ENCODE measurements at regions of chr9 and their contacts with region 1.

Region 1: DNA sequence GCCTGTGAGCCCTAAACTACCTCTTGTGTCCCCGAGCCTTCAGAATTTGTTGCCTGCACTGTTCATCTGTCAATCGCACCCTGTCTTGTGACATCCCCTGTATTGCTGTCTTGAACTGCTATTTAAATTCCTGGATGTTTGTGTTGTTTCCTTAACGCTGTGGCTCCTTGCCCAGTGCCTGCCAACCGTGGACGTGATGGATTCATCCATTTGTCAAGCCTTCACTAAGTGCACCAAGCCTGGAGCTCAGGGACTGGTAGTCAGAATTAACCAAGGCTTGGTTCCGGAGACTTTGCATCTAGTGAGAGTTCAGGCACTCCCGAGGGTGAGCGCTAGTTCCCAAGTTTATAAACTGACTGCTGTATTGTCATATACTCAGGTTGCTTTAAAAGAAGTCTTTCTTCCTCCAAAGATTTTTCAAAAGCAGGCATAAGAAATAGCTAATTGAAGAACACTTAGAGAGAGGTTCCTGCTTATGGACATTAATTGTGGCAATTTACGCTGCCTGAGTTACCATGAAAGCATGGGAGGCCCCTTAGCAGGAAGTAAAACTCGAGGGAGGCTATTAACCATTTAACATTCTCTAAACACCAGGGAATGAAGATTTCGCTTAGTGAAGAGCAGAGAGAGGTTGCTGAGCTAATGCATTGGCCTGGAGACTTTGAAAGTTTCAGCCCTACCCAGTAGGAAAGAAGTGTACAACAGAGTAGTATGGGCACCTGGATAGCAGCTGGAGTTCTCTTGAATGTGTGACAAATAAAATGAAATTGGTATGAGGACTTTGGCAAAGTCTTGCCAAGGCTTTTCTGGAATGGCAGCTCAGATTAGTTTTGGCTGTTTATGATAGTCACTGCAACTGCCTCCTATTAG is 29.1 kb downstream of the RGS3 start:
- DNase-seq: peak in 1 of 2 donors; percentile 50
- ATAC-seq: peak in 7 of 8 donors; percentile 5 to 63 (median 40)
- H3K4me3 ChIP-seq: no peak overlapping the region
- H3K27ac ChIP-seq: peak overlapping the region in 9 of 10 donors; percentile 29 to 83 (median 69)
- H3K4me1 ChIP-seq: peaks cover 0 to 52% (median 31%) of the 10 kb centered on the region in 9 donors
- H3K27me3 ChIP-seq: no peaks in the 10 kb centered on the region
- CTCF ChIP-seq: no peak

Region 2: DNA sequence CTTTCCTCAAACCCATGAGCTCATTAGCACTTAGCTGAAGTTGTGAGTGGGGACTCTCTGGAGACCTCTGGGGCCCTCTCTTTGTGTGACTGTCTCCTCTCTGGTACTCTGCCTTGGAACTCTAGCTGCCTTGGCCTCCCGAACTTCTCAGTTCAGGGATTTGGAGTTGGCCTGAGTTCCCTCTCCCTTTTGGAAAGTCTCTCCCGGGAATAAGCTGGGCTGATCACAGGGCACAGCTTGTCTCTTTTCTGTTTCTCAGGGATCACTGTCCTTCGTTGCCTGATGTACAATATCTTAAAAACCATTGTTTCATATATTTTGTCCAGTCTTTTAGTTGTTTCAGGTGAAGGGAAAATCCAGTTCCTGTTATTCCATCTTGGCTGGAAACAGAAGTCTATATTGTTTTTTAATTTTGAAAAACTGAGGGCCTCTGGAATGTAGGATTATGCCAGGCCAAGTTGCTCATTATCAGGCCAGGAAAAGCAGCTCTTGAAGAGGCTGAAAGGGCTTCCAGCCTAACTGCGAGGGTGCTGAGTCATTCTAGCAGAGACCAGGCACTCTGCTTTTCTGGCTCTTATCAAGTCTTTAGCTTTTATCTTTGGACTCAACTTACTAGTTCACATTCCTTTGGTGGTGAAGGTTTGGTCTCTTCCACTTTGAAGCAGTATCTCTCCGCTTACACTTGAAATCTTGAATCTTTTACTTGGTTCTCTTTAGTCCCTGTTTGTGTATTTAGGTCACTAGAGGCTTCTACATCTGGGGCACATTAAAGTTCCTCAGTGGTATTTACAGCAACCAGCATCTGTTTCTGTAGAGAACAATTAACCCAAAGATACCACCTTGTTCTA is 37.4 kb before region 1 on chr9:
- intact Hi-C with region 1: loop called in 2 of 10 experiments (anchors 5 kb)
- DNase-seq: peak in 1 of 2 donors; percentile 68
- ATAC-seq: peak; percentile 89 to 97 (median 96)
- H3K4me3 ChIP-seq: no peak overlapping the region
- H3K27ac ChIP-seq: peak overlapping the region; percentile 71 to 98 (median 90)
- H3K4me1 ChIP-seq: peaks cover 21 to 47% (median 32%) of the 10 kb centered on the region in 9 donors
- H3K27me3 ChIP-seq: no peaks in the 10 kb centered on the region
- CTCF ChIP-seq: no peak

Region 3: GRCh38 chr9:113548221-113549041 is 55.9 kb after region 1 on chr9:
- intact Hi-C with region 1: no loop called
- DNase-seq: peak; percentile 73 to 79
- ATAC-seq: peak; percentile 85 to 95 (median 92)
- H3K4me3 ChIP-seq: peak overlapping the region in 1 of 10 donors; percentile 0
- H3K27ac ChIP-seq: peak overlapping the region; percentile 70 to 91 (median 84)
- H3K4me1 ChIP-seq: peaks cover 15 to 73% (median 52%) of the 10 kb centered on the region in 9 donors
- H3K27me3 ChIP-seq: no peaks in the 10 kb centered on the region
- CTCF ChIP-seq: no peak

Region 4: DNA sequence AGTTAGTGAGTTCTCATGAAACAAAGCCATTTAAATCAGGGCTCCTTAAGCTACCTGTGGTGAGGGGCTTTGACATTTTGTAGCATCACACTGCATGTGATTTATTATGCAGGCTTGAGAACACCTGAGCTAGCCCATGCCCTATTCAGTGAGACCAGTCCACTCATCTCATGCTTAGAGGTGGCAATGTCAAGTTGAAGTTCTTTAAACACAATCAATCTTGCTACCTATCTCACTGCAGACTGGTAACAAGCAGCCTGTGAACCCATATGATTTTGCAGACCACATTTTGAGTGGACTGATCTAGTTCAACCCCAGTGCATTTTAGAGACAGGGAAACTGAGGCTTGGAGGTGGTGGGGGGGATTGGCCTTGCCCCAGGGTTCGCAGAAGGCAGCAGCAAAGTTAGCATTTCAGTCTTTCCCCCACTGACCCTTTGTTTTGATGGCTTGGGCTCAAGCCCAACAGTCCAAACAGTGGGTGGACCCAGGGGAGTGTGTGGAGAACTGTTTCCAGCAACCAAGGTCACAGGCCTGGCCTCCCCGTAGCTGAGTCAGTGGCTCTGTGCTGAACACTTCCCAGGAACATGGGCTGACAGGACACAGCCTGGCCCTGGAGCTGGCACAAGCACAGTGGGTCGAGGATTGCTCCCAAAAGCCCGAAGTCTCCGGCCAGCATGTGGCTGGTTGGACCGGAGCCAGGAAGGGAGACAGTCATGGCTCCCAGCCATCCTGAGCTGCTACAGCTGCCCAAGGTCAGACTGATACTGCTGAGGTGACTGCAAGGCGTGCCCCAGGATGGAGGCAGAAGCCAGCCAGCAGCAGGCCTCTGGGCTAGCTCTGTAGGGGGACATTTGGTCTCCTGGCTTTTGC is 66.3 kb after region 1 on chr9:
- intact Hi-C with region 1: no loop called
- DNase-seq: peak; percentile 89 to 90
- ATAC-seq: peak; percentile 92 to 98 (median 95)
- H3K4me3 ChIP-seq: no peak overlapping the region
- H3K27ac ChIP-seq: peak overlapping the region; percentile 60 to 97 (median 81)
- H3K4me1 ChIP-seq: peaks cover 8 to 74% (median 46%) of the 10 kb centered on the region in 9 donors
- H3K27me3 ChIP-seq: no peaks in the 10 kb centered on the region
- CTCF ChIP-seq: no peak

Region 5: GRCh38 chr9:113578882-113579282 is 86.3 kb after region 1 on chr9:
- intact Hi-C with region 1: no loop called
- DNase-seq: no peak
- ATAC-seq: peak in 3 of 8 donors; percentile 3 to 20 (median 14)
- H3K4me3 ChIP-seq: peak overlapping the region in 1 of 10 donors; percentile 44
- H3K27ac ChIP-seq: peak overlapping the region; percentile 16 to 93 (median 88)
- H3K4me1 ChIP-seq: peaks cover 58 to 100% (median 85%) of the 10 kb centered on the region in 9 donors
- H3K27me3 ChIP-seq: no peaks in the 10 kb centered on the region
- CTCF ChIP-seq: no peak

Region 6: DNA sequence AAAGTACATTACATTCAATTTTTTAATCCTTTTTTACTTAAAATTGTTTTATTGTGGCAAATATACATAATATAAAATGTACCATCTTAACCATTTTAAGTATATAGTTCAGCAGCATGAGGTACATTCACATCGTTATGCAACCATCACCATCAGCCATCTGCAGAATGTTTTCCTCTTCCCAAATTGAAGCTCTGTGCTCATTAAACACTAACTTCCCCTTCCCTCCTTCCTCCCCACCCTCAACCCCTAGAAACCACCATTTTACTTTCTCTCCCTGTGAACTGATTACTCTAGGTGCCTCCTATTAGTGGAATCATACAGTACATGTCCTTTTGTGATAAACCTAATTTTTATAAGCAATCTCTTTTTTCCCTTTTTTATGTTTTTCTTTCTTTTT is 1149.4 kb after region 1 on chr9:
- intact Hi-C with region 1: no loop called
- DNase-seq: no peak
- ATAC-seq: no peak
- H3K4me3 ChIP-seq: no peak overlapping the region
- H3K27ac ChIP-seq: no peak overlapping the region
- H3K4me1 ChIP-seq: peaks cover 0 to 10% (median 0%) of the 10 kb centered on the region in 9 donors
- H3K27me3 ChIP-seq: no peaks in the 10 kb centered on the region
- CTCF ChIP-seq: no peak